ENCODE measurements at regions of chr21 and their contacts with region 1.

Region 1: GRCh38 chr21:39269620-39270019 is 43.8 kb downstream of the BRWD1 start:
- DNase-seq: no peak
- H3K4me3 ChIP-seq: no peak overlapping the region
- H3K27ac ChIP-seq: no peak overlapping the region
- H3K4me1 ChIP-seq: no peaks in the 10 kb centered on the region
- H3K27me3 ChIP-seq: no peaks in the 10 kb centered on the region
- CTCF ChIP-seq: no peak

Region 2: DNA sequence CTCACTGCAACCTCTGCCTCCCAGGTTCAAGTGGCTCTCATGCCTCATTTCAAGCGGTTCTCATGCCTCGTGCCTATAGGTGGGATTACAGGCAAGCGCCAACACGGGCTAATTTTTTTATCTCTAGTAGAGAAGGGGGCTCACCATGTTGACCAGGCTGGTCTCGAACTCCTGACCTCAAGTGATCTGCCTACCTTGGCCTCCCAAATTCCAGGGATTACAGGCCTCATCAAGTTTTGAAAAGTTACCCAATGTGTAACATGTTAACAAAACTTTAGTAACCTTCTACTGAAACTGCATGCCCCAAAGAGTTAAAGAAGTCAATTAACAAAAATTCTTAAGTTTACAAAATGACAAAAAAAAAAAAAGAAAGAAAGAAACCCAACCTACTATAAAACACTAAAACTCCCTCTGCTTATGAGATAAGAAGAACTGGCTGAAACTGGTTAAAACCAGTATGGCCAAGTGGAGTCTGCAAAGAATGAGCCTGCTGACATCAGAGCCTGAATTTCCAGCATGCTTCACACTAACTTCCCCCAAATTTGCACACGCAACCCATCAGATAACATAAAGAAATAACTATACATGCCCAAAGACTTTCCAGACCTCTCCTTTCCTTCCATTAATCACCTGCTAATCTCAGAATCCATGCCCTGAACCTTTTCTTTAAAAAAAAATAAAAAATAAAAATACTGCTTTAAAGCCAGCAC is 60.8 kb before region 1 on chr21:
- intact Hi-C with region 1: no loop called
- DNase-seq: peak; percentile 62
- H3K4me3 ChIP-seq: no peak overlapping the region
- H3K27ac ChIP-seq: no peak overlapping the region
- H3K4me1 ChIP-seq: no peaks in the 10 kb centered on the region
- H3K27me3 ChIP-seq: no peaks in the 10 kb centered on the region
- CTCF ChIP-seq: no peak

Region 3: GRCh38 chr21:39221282-39221996 is 48.2 kb before region 1 on chr21:
- intact Hi-C with region 1: loop called (anchors 10 kb)
- DNase-seq: no peak
- H3K4me3 ChIP-seq: no peak overlapping the region
- H3K27ac ChIP-seq: no peak overlapping the region
- H3K4me1 ChIP-seq: no peaks in the 10 kb centered on the region
- H3K27me3 ChIP-seq: no peaks in the 10 kb centered on the region
- CTCF ChIP-seq: no peak